ENCODE measurements at regions of chr1 and their contacts with region 1.

Region 1: DNA sequence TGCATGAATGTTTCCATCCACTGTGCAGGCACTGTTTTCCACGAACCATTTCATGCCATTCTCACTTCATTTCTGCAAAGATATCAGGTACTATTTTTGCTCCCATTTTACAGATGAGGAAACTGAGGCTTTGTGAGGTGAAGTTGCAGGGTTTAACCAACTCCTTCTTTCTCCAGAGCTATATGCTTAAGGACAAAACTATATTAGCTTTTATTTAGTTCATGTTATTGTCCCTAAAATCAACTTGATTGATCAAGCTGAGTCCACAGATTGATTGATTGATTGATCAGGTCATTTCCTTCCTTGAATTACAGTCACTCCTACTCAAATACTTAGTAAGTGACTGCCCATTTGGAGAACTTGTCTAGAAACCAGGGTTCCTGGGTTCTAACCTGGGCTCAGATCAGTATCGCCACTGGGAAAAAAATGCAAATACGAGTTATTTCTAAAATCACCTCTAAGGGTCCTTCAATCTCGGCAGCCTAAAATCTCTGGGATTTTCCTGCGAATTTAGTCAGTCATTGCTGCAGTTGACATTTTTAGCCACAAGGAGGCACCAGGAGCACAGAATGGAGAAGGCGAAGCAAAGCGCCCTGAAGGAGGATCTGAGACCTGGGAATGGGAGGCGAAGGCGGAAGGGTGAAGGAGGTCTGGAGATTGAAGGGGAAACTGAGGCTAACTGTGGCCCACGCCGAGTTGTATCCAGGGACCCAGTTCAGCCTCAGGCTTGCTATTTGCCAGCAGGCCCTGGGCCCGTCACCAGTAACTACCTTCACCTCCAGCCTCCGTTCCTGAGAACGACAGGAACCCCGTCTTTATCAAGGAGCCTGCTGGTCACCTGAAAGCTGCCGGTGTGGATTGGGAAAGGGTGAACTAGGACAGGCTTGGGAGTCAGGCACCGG is 14.3 kb upstream of the MUL1 start:
- DNase-seq: peak in 2 of 3 donors; percentile 52 to 73
- ATAC-seq: peak; percentile 85 to 93 (median 90)
- H3K4me3 ChIP-seq: no peak overlapping the region
- H3K27ac ChIP-seq: no peak overlapping the region
- H3K4me1 ChIP-seq: no peaks in the 10 kb centered on the region
- H3K27me3 ChIP-seq: no peaks in the 10 kb centered on the region
- CTCF ChIP-seq: peak; percentile 82 to 90 (median 86)
- POLR2A ChIP-seq: no peak

Region 2: GRCh38 chr1:20265250-20265649 is 257.0 kb before region 1 on chr1:
- intact Hi-C with region 1: no loop called
- DNase-seq: no peak
- ATAC-seq: peak in 1 of 4 donors; percentile 25
- H3K4me3 ChIP-seq: no peak overlapping the region
- H3K27ac ChIP-seq: no peak overlapping the region
- H3K4me1 ChIP-seq: no peaks in the 10 kb centered on the region
- H3K27me3 ChIP-seq: no peaks in the 10 kb centered on the region
- CTCF ChIP-seq: no peak
- POLR2A ChIP-seq: no peak

Region 3: DNA sequence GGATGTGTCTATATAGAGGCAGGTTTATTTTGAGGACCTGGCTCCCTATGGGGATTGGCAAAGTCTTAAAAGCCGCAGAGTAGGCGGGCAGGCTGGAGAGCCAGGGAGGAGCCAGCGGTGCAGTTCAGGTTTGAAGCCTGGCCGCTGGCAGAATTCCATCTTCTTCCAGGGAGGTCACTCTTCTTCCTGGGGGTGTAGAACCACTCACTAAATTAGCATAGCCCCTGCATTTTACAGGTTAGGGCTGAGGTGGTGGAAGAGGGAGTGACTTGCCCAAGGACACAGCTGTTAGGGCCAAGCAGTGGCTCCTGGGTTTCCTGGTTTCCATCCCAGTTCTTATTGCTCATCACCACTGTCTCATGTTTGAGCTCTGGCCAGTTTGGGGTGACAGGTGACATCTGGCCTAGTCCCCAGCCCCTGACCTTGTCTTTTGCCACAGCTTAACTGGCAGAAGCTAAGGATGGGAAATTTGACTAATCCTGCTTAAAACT is 112.4 kb after region 1 on chr1:
- intact Hi-C with region 1: loop called in 1 of 2 experiments (anchors 5 kb)
- DNase-seq: peak; percentile 57 to 77 (median 66)
- ATAC-seq: peak; percentile 55 to 67 (median 62)
- H3K4me3 ChIP-seq: peak overlapping the region; percentile 80 to 89 (median 88)
- H3K27ac ChIP-seq: peak overlapping the region in 2 of 3 donors; percentile 96 to 97
- H3K4me1 ChIP-seq: peaks cover 0 to 19% (median 9%) of the 10 kb centered on the region in 4 donors
- H3K27me3 ChIP-seq: no peaks in the 10 kb centered on the region
- CTCF ChIP-seq: no peak
- POLR2A ChIP-seq: no peak

Region 4: DNA sequence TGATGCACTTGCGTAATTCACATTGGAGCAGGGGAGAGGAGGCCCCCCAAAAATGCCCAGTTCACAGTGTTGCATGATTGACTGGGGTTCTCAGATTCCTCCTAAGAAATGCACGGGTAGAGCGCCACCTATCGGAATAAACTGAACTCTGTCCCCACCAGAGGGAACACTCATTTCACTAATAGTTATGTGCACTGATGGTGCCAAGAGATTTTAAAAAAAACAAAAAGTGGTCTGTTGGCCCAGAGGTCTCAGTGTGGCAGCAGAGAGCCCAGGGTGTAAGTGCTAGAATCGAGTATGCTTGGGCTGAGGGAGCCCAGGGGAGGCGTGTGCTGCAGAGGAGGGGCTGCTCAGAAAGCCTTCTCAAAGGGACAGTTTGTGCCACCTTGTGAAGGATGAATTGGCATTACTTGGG is 118.0 kb after region 1 on chr1:
- intact Hi-C with region 1: loop called (anchors 5 kb)
- DNase-seq: peak in 1 of 3 donors; percentile 16
- ATAC-seq: peak; percentile 55 to 80 (median 72)
- H3K4me3 ChIP-seq: no peak overlapping the region
- H3K27ac ChIP-seq: no peak overlapping the region
- H3K4me1 ChIP-seq: peaks cover 0 to 2% (median under 1%) of the 10 kb centered on the region in 4 donors
- H3K27me3 ChIP-seq: no peaks in the 10 kb centered on the region
- CTCF ChIP-seq: peak; percentile 75 to 82 (median 76)
- POLR2A ChIP-seq: no peak

Region 5: DNA sequence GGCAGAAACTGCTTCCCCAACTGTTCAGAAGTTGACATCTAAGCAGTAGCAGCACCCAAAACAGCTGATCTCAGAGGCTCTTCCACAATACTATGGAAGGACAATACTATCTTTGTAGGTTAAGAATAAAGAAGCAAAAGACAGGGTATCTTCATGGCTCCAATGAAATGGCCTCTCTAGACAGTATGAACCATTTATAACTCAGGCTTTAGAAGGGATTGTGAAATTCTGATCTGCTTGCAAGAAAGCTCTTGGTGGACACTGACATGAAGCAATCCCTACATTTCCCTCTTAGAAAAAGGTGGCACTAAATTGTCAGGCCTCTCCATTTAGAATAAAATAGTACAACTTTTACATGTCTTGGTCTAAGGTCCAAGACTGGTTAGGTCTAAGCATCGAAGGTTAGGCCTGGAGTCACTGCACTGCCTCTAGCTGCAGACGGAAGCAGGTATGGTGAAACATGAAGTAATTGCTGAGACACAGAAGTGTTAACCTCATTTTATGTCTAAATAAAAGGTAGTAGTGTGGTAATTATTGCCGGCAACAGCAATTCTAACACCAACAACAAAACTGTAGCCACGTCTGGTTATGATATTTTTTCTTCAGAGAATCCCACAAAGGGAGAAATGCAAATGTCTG is 315.5 kb after region 1 on chr1:
- intact Hi-C with region 1: no loop called
- DNase-seq: no peak
- ATAC-seq: no peak
- H3K4me3 ChIP-seq: no peak overlapping the region
- H3K27ac ChIP-seq: no peak overlapping the region
- H3K4me1 ChIP-seq: no peaks in the 10 kb centered on the region
- H3K27me3 ChIP-seq: no peaks in the 10 kb centered on the region
- CTCF ChIP-seq: no peak
- POLR2A ChIP-seq: no peak

Measured in right lobe of liver (tissue), 6 donors.